Left cardiac atrium (tissue), 4 donors: ENCODE measurements at regions of chr19 and their contacts with region 1.

Region 1: DNA sequence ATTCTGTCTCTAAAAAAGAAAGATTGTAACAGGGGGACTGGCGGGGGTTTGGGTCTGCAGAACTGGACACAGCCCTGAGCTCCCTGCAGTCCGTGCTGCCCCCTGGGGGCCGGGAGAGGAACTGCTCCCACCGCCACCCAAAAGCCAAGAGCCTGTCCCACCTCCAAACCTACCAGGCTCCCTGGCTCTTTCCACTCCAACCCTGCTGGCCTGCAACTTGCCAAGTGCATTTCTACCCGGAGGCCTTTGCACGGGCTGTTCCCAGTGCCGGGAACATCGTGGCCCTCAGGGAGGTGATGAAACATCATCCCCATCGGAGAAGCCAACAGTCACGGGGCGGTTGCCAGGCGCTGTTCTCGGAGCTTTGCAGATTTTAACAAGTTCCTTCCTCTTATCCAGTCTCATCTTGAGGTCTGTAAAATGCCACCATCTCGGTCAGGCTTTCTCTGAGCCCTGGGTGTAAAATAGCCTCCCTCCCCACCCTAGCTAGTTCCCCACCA is 50.7 kb downstream of the SMIM24 start:
- DNase-seq: peak; percentile 92
- ATAC-seq: peak; percentile 82 to 85

Region 2: DNA sequence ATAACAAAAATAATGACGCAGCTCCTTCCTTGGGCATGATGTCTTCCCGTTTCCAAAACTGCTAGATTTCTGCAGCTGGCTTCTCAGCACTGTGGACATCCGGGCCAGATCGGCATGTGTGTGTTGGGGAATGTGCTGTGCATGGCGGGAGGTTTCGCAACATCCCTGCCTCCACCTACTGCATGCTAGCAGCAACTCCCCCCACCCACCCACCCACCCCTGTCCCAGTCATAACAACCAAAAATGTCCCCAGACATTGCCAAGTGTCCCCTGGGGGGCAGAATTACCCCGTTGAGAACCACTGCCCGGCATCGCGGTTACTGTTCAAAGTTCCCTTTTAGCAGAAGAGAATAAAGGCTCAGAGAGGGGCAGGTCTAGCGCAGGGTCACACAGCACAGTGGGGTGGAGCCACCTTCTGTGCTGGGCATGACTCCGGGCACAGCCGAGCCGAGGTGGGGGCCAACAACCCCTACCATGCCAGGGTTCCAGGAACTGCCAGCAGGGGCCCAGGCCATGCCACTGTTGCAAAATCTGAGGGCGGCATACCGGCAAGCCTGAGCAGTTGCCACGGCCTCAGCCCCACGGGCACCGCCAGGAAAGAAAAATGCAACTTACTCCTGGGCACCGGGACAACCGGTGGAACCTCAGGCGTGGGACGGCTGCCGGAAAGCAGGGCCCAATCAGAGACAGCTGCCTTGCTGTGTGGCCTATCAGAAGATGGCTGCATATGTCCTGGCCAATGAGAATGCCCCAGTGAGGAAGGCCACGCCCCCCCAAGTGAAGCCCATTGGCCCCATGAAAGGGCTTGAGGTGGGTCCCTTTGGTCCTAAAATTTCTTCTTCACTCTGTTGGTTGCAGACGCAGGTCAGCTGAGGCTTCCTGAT is 85.8 kb before region 1 on chr19:
- intact Hi-C with region 1: loop called in 1 of 2 experiments (anchors 10 kb)
- DNase-seq: peak; percentile 86
- ATAC-seq: peak; percentile 81 to 88